ENCODE measurements at regions of chr20 and their contacts with region 1.

Region 1: GRCh38 chr20:4607287-4607713 is 114.4 kb upstream of the PRND start:
- DNase-seq: peak; percentile 21
- H3K4me3 ChIP-seq: no peak overlapping the region
- CTCF ChIP-seq: peak; percentile 80

Region 2: DNA sequence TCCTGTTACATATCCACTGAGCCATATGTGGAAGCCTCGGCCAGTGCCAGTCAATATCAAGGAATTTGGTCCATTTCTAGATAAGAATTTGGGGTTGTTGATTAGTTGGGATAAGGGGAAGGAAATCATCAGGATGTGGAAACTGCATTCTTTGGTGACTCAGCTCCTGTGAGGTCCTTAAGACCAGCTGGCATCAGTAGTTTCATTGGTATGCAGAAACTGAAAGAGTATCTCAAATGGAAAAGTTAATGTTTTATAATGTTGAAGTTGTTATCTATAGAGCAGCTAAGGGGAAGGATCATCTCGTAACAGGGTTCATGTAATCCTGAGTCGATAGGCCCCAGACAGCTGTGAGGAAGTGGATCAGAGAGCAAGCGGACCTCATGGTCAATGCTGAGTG is 26.5 kb after region 1 on chr20:
- CTCF ChIA-PET with region 1: interaction called, 10 read pairs
- POLR2A ChIA-PET with region 1: no interaction called
- DNase-seq: peak; percentile 77
- H3K4me3 ChIP-seq: no peak overlapping the region
- CTCF ChIP-seq: no peak

Region 3: GRCh38 chr20:4689220-4689619 is 81.9 kb after region 1 on chr20:
- CTCF ChIA-PET with region 1: interaction called, 12 read pairs
- POLR2A ChIA-PET with region 1: no interaction called
- DNase-seq: no peak
- H3K4me3 ChIP-seq: no peak overlapping the region
- CTCF ChIP-seq: no peak

Region 4: DNA sequence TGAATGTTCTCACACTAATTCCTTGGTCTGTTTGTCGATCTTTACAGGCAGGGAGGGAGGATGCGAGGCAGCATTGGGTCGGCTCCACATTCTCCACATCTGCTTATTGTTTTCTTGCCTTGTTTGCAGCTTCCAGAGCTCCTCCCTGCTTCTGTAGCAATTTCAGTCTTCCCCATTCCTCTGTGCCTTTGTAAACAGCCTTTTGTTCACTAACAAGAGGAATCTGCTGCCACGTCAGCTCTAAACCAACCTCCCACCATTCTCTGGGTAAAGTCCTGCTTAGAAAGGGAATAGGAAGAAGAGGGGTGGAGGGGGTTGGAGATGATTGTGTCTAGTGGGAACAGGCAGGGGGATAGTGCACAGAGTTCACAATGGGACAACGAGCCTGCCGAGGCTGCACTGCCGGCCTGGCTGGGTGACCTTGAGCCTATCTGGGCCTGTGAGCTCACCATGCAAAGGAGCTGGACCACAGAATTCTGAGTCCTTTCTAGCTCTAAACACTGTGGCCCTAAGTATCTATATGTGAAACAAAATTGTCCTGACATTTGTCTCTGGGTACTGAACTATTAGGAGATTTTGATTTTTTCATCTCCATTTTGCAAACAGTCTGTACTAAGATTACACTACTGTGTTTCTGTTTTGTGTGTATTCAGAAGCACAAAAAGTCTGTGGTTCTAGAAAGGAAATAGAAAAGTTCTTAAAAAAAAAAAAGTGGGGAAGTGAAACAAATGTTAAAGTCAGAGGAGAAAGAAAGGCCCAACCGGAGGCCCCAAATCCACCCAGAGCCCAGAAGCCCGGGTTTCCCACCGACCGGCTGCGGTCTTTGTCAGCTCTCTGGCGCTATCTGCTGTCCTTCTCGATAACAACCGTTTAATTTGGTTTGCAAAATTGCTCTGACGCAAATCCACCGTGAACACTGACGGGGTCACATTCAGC is 113.0 kb after region 1 on chr20:
- CTCF ChIA-PET with region 1: interaction called, 459 read pairs
- POLR2A ChIA-PET with region 1: no interaction called
- DNase-seq: peak; percentile 14
- H3K4me3 ChIP-seq: no peak overlapping the region
- CTCF ChIP-seq: peak; percentile 63

Measured in AG04449 (cell line).